ENCODE measurements at regions of chr5 and their contacts with region 1.

Region 1: GRCh38 chr5:37412515-37413277 is 33.6 kb downstream of the WDR70 start:
- DNase-seq: peak; percentile 64
- H3K4me3 Mint-ChIP-seq: no peak overlapping the region
- H3K27ac Mint-ChIP-seq: no peak overlapping the region
- H3K4me1 Mint-ChIP-seq: no peaks in the 10 kb centered on the region
- H3K27me3 Mint-ChIP-seq: no peaks in the 10 kb centered on the region

Region 2: DNA sequence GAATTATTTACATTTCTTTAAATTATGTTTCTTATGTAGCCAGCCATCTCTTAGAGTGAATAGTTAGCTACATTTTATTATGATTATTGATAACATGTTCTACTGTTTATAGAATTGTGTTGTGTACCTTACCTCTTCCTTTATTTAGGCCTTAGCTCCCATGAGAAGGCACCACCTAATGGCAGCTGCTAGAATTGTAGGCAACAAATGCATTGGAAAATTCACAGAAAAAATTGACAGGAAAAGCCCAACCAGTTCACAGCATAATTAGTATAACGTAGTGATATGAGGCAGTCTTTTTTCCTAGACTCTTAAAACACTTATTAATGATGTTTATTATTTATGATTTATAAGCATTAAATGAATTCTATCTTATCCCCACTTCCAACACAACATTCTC is 142.2 kb after region 1 on chr5:
- CTCF ChIA-PET with region 1: interaction called, 9 read pairs
- intact Hi-C with region 1: loop called (anchors 2 kb)
- DNase-seq: no peak
- H3K4me3 Mint-ChIP-seq: no peak overlapping the region
- H3K27ac Mint-ChIP-seq: no peak overlapping the region
- H3K4me1 Mint-ChIP-seq: peaks cover 11% of the 10 kb centered on the region
- H3K27me3 Mint-ChIP-seq: no peaks in the 10 kb centered on the region

Region 3: GRCh38 chr5:37757980-37758583 is 345.4 kb after region 1 on chr5:
- CTCF ChIA-PET with region 1: interaction called, 4 read pairs
- intact Hi-C with region 1: loop called (anchors 5 kb)
- DNase-seq: no peak
- H3K4me3 Mint-ChIP-seq: no peak overlapping the region
- H3K27ac Mint-ChIP-seq: no peak overlapping the region
- H3K4me1 Mint-ChIP-seq: peaks cover 2% of the 10 kb centered on the region
- H3K27me3 Mint-ChIP-seq: no peaks in the 10 kb centered on the region

Region 4: GRCh38 chr5:37837414-37838032 is 424.8 kb after region 1 on chr5:
- CTCF ChIA-PET with region 1: interaction called, 3 read pairs
- intact Hi-C with region 1: loop called (anchors 1 kb)
- DNase-seq: peak; percentile 85
- H3K4me3 Mint-ChIP-seq: peak overlapping the region; percentile 49
- H3K27ac Mint-ChIP-seq: no peak overlapping the region
- H3K4me1 Mint-ChIP-seq: peaks cover 33% of the 10 kb centered on the region
- H3K27me3 Mint-ChIP-seq: peaks cover 81% of the 10 kb centered on the region

Region 5: GRCh38 chr5:38193015-38193581 is 780.4 kb after region 1 on chr5:
- CTCF ChIA-PET with region 1: interaction called, 23 read pairs
- intact Hi-C with region 1: loop called (anchors 1 kb)
- DNase-seq: peak; percentile 78
- H3K4me3 Mint-ChIP-seq: no peak overlapping the region
- H3K27ac Mint-ChIP-seq: no peak overlapping the region
- H3K4me1 Mint-ChIP-seq: peaks cover 4% of the 10 kb centered on the region
- H3K27me3 Mint-ChIP-seq: peaks cover 22% of the 10 kb centered on the region

Measured in activated naive CD4-positive, alpha-beta T cell treated with anti-CD3 and anti-CD28 coated beads for 36 hours (primary cell).